CD4-positive, alpha-beta memory T cell (primary cell): ENCODE measurements at regions of chr3 and their contacts with region 1.

Region 1: DNA sequence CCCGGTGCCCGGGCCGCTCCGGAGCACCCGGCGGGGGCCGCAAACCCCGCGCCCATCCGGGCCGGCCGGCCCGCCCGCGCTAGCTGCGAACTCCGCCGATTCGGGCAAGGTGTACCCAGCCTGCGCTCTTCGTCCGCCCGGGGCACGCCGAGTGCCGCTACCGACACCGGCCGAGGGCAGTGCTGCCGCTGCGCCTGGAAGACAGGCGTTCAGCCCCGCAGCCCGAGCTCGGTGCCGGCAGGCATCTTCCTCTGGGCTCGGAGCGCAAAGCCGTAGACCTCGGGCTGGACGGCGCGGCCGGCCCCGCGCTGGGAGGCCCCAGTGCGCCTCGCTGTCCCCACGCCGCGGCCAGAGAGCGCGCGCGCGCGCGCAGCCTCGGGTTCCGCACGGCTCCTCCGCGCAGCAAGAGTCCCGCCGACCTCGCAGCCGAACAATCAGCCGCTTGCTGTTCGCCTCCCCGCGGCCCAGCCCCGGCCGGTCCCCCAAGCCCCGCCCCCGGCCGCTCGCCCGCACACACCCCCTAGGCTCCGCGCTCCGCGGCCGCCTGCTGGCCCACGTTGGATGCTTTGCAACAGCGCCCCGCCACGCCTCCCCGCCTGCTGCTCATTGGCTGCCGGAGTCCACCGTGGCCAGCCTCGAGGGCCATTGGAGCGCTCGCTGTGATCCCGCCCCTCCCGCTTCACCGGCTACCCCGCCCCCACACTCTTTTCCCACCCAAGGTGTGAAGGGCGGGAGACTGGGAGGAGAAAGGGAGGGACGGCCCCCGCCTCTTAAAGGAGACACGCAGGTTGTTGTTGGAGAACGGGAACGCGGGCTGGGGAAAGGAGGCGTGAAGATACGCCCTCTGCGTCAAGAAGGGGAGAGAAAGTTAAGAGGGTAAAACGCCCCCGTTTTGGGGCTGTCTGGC is at the start of gene LRIG1:
- DNase-seq: peak; percentile 97 to 98 (median 97)
- H3K4me3 ChIP-seq: peak within 1 kb of the TSS; percentile 9 to 72
- H3K4me3 Mint-ChIP-seq: peak within 1 kb of the TSS; percentile 93 to 99 (median 98)
- H3K27ac ChIP-seq: peak within 1 kb of the TSS; percentile 61
- H3K27ac Mint-ChIP-seq: peak within 1 kb of the TSS; percentile 82 to 96 (median 89)
- H3K4me1 ChIP-seq: peaks cover 61% of the 10 kb centered on the region
- H3K4me1 Mint-ChIP-seq: peaks cover 50 to 73% (median 59%) of the 10 kb centered on the region in 4 donors
- H3K27me3 ChIP-seq: no peaks in the 10 kb centered on the region
- H3K27me3 Mint-ChIP-seq: no peaks in the 10 kb centered on the region
- total RNA-seq, gene LRIG1: 66.3 to 71.7 TPM

Region 2: GRCh38 chr3:66276705-66277274 is 224.0 kb before region 1 on chr3:
- CTCF ChIA-PET with region 1: no interaction called
- POLR2A ChIA-PET with region 1: no interaction called
- intact Hi-C with region 1: loop called (anchors 2 kb)
- DNase-seq: peak; percentile 71 to 75 (median 73)
- H3K4me3 ChIP-seq: no peak overlapping the region
- H3K4me3 Mint-ChIP-seq: no peak overlapping the region
- H3K27ac ChIP-seq: no peak overlapping the region
- H3K27ac Mint-ChIP-seq: peak overlapping the region; percentile 6 to 86 (median 71)
- H3K4me1 ChIP-seq: peaks cover 34% of the 10 kb centered on the region
- H3K4me1 Mint-ChIP-seq: peaks cover 25 to 45% (median 34%) of the 10 kb centered on the region in 4 donors
- H3K27me3 ChIP-seq: no peaks in the 10 kb centered on the region
- H3K27me3 Mint-ChIP-seq: no peaks in the 10 kb centered on the region

Region 3: GRCh38 chr3:66428733-66429132 is 72.1 kb before region 1 on chr3:
- CTCF ChIA-PET with region 1: no interaction called
- POLR2A ChIA-PET with region 1: interaction called, 3 read pairs
- intact Hi-C with region 1: loop called (anchors 5 kb)
- DNase-seq: no peak
- H3K4me3 ChIP-seq: no peak overlapping the region
- H3K4me3 Mint-ChIP-seq: no peak overlapping the region
- H3K27ac ChIP-seq: no peak overlapping the region
- H3K27ac Mint-ChIP-seq: no peak overlapping the region
- H3K4me1 ChIP-seq: peaks cover 11% of the 10 kb centered on the region
- H3K4me1 Mint-ChIP-seq: peaks cover 48 to 87% (median 69%) of the 10 kb centered on the region in 4 donors
- H3K27me3 ChIP-seq: no peaks in the 10 kb centered on the region
- H3K27me3 Mint-ChIP-seq: no peaks in the 10 kb centered on the region

Region 4: GRCh38 chr3:66483406-66483906 is 17.4 kb before region 1 on chr3:
- CTCF ChIA-PET with region 1: interaction called, 12 read pairs
- POLR2A ChIA-PET with region 1: interaction called, 61 read pairs
- intact Hi-C with region 1: loop called (anchors 1 kb)
- DNase-seq: peak in 2 of 5 donors; percentile 34 to 63
- H3K4me3 ChIP-seq: no peak overlapping the region
- H3K4me3 Mint-ChIP-seq: peak overlapping the region; percentile 59 to 89 (median 74)
- H3K27ac ChIP-seq: no peak overlapping the region
- H3K27ac Mint-ChIP-seq: peak overlapping the region; percentile 68 to 83 (median 81)
- H3K4me1 ChIP-seq: peaks cover 97% of the 10 kb centered on the region
- H3K4me1 Mint-ChIP-seq: peaks cover 53 to 79% (median 64%) of the 10 kb centered on the region in 4 donors
- H3K27me3 ChIP-seq: no peaks in the 10 kb centered on the region
- H3K27me3 Mint-ChIP-seq: no peaks in the 10 kb centered on the region

Region 5: GRCh38 chr3:66554178-66554577 is 53.3 kb after region 1 on chr3:
- CTCF ChIA-PET with region 1: no interaction called
- POLR2A ChIA-PET with region 1: no interaction called
- intact Hi-C with region 1: no loop called
- DNase-seq: no peak
- H3K4me3 ChIP-seq: no peak overlapping the region
- H3K4me3 Mint-ChIP-seq: no peak overlapping the region
- H3K27ac ChIP-seq: no peak overlapping the region
- H3K27ac Mint-ChIP-seq: no peak overlapping the region
- H3K4me1 ChIP-seq: no peaks in the 10 kb centered on the region
- H3K4me1 Mint-ChIP-seq: no peaks in the 10 kb centered on the region
- H3K27me3 ChIP-seq: no peaks in the 10 kb centered on the region
- H3K27me3 Mint-ChIP-seq: peaks cover 0 to 8% of the 10 kb centered on the region in 2 donors

Region 6: DNA sequence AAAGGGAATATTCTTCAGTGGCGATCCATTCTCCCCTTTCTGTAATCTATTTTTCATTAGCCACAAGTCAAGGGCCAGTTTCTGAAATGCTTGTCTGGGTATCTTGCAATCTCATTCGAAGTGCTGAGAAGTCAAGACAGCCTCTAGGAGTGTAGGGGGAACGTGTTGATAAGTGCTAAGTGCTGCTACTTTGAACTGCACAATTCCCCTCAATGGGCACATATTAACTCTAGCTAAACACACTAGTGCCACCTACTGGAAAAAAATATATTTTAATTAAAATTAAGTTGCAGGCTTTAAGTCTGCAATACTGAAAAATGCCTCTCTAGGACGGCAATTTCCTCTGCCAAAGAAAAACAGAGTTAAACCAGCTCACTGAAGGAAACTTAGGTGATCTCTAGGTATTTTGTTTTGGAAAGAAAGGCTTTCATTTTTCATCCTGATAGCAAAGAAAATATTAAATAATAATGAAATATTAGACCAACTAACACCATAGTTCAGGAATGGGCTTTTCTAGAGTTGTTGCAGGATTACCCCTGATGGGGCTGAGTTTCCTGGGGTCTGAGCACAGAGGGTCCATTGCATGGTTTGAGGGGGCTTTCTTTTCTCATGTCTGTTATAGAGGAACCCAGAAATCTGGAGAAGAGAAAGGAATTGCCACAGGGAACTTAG is 315.4 kb after region 1 on chr3:
- CTCF ChIA-PET with region 1: no interaction called
- POLR2A ChIA-PET with region 1: no interaction called
- intact Hi-C with region 1: loop called (anchors 10 kb)
- DNase-seq: peak in 4 of 5 donors; percentile 60 to 69 (median 64)
- H3K4me3 ChIP-seq: no peak overlapping the region
- H3K4me3 Mint-ChIP-seq: no peak overlapping the region
- H3K27ac ChIP-seq: no peak overlapping the region
- H3K27ac Mint-ChIP-seq: no peak overlapping the region
- H3K4me1 ChIP-seq: no peaks in the 10 kb centered on the region
- H3K4me1 Mint-ChIP-seq: peaks cover 0 to 2% (median under 1%) of the 10 kb centered on the region in 4 donors
- H3K27me3 ChIP-seq: no peaks in the 10 kb centered on the region
- H3K27me3 Mint-ChIP-seq: peaks cover 0 to 9% of the 10 kb centered on the region in 2 donors